K562 (cell line): ENCODE measurements at regions of chr10 and their contacts with region 1.

Region 1: DNA sequence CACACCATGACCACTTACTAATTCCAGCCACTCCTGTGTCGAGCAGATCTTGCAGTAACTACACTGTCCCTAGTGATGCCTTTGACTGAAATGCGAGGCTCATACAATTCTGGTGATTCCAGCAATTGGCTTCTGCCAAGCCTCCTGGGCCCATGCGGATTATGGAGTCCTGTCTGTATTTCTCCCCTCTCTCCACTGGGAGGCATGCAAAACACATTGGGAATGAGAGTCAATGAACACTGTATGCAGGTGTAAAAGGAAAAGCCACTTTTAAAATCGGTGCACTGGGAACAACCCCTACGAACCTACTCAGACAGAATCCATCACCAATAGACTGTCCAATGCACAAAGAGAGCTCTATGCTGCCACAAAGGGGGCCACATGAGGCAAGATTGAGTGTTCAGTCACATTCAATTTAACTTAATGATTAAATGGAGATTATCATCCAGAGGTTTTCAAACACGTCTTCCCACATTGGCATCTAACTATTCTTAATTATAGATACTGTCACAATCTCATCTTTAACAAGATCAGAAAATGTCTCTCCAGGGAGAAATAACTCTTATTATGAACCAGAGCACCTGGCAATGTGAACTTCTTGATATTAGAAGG is 550.6 kb downstream of the GLRX3 start:
- DNase-seq: peak; percentile 7 to 19 (median 12)
- ATAC-seq: peak; percentile 55; the same call in 1 of the 3 replicates
- H3K4me3 ChIP-seq: no peak overlapping the region
- H3K27ac ChIP-seq: no peak overlapping the region
- H3K4me1 ChIP-seq: no peaks in the 10 kb centered on the region
- H3K27me3 ChIP-seq: no peaks in the 10 kb centered on the region
- CTCF ChIP-seq: peak; percentile 20 to 42 (median 35); a peak in 2 of 6 replicates
- EP300 ChIP-seq: no peak
- POLR2A ChIP-seq: no peak
- RAD21 ChIP-seq: peak in 1 of 2 experiments; percentile 36; a peak in 2 of 4 replicates

Region 2: DNA sequence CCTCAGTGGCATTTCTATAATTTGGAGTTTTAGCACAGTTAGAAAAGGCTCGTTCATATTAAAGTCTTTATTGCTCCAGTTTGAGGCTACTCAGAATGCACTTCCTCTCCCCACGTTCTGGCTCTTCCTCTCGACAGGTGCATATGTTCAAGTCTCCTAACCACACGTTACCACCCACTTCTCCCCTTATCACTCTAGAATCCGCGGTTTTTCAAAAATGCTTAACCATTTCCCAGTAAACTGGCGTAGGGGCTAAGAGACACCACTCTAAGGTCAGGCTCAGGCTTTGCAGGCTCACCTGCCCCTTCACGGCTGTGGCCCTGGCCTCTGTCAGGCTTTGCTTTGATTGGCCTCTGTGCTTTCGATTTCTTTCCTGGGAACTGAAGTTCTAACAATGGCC is 167.0 kb before region 1 on chr10:
- CTCF ChIA-PET with region 1: no interaction called
- POLR2A ChIA-PET with region 1: no interaction called
- in situ Hi-C with region 1: no loop called
- intact Hi-C with region 1: no loop called
- DNase-seq: no peak
- ATAC-seq: no peak
- H3K4me3 ChIP-seq: no peak overlapping the region
- H3K27ac ChIP-seq: no peak overlapping the region
- H3K4me1 ChIP-seq: no peaks in the 10 kb centered on the region
- H3K27me3 ChIP-seq: no peaks in the 10 kb centered on the region
- CTCF ChIP-seq: no peak
- EP300 ChIP-seq: no peak
- POLR2A ChIP-seq: no peak
- RAD21 ChIP-seq: no peak

Region 3: DNA sequence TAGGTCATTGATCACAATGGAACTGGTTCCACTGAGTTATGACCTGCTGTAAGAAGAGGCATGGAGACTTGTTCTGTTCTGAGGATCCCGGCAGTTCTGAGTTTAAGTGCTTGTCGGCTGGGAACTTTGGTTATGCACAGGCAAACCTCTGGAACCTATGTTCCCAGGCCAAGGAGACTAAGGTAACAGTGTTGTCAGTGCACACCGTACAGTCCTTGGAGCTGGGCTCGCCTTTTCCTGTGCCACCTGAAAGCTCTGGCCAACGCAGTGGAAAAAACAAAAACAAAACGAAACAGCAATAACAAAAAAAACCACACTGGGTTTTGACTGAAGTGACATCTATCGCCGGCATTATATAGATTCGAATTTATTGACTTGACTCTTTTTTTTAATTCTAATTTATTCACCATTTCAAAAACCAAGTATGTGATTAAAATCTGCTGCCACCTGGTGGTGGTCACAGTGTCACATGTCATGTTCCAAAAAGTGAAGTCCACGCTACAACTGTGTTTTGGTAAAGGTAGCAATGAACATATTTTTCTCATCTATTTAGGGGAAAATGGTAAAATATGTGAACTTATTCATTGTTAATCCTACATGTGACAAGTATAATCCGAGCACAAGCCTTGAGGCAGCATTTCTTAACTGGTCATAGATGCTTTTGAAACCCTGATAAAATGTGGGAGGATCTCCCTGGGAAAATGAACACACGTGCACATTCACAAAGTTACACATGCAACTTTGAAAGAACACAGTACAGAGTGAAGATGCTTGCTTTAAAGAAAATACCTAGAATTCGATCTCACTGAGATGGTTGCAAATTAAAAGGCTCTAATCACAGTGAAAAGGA is 1100.2 kb after region 1 on chr10:
- CTCF ChIA-PET with region 1: no interaction called
- POLR2A ChIA-PET with region 1: no interaction called
- in situ Hi-C with region 1: no loop called
- intact Hi-C with region 1: loop called (anchors 5 kb)
- DNase-seq: peak in 3 of 4 experiments; percentile 31 to 41 (median 32)
- ATAC-seq: no peak
- H3K4me3 ChIP-seq: no peak overlapping the region
- H3K27ac ChIP-seq: no peak overlapping the region
- H3K4me1 ChIP-seq: no peaks in the 10 kb centered on the region
- H3K27me3 ChIP-seq: no peaks in the 10 kb centered on the region
- CTCF ChIP-seq: peak; percentile 24 to 61 (median 55); a peak in 5 of 6 replicates
- EP300 ChIP-seq: no peak
- POLR2A ChIP-seq: no peak
- RAD21 ChIP-seq: peak; percentile 27 to 49; a peak in 3 of 4 replicates

Region 4: DNA sequence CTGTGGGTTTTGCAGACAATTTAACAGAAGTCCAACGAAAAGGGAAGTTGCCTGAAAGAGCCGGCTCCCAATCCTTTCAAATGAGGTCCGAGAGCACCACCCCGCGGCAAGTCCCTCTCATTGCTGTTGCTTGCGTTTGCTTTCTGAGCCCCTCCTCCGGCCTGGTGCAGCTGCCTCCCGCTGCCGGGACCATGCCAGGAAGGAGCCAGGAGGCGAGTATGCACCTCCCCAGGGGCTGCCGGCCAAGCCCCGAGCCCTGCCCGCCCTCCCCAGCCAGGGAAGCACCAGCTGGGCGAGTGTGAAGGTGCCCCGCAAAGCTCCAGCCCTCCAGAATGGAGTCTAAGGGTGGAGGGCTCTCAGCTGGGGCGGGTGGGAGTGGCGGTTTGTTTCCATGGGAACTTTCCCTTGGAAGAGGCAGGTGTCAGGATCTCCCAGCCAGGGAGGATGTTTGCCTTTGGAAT is 1188.2 kb after region 1 on chr10:
- CTCF ChIA-PET with region 1: no interaction called
- POLR2A ChIA-PET with region 1: no interaction called
- in situ Hi-C with region 1: no loop called
- intact Hi-C with region 1: loop called (anchors 10 kb)
- DNase-seq: peak; percentile 72 to 76 (median 74)
- ATAC-seq: peak; percentile 94
- H3K4me3 ChIP-seq: no peak overlapping the region
- H3K27ac ChIP-seq: no peak overlapping the region
- H3K4me1 ChIP-seq: peaks cover 0 to 10% of the 10 kb centered on the region in 2 experiments; a peak in 2 of 5 replicates
- H3K27me3 ChIP-seq: peaks cover 15 to 50% of the 10 kb centered on the region in 2 experiments
- CTCF ChIP-seq: peak; percentile 75 to 82 (median 75)
- EP300 ChIP-seq: no peak
- POLR2A ChIP-seq: no peak
- RAD21 ChIP-seq: peak; percentile 58 to 77